ENCODE measurements at regions of chr13 and their contacts with region 1.

Region 1: DNA sequence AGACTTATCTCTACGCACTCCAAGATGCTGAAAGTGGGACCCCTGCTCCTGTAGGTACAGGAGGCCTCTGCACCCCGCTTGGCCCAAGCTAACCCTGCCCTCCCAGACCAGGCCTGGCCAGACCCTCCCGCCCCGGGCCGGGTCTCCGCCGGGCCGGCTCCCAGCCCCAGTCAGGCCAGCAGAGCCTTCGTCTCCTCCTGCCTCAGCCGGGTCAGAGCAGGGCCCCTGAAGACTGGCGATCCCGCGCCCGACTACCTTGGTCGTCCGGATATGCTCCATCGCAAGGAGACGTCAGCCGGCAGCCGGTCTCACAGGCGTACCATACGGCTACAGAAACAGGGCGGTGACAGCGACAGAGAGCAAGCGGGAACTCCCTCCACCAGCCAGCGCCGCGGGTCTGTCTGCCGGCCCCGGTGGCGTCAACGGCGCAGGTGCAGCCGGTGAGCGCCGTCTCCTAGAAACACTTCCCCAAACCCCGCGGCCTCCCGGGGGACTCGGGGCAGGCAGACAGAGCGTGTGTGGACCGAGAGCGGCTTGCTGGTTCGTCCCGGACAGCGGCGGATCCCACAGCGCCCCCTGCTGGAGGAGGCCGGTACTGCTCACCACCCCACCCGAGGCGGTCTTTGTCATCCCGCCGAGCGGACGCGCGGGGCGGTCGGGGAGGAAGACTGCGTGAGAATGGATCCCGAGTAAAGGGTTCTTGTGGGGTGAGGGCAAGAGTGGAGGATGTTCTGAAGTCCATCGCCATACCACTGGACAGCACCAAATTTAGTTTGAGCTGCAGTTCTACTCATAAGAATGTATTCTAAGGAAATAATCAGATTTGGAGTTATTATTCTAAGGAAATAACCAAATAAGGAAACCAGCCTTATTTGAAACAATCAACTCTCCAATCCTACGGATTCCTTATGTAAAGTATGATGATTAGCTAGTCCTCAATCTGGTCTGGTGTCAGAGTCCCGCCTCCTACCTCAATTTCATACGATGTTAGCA is at the start of gene MTMR6:
- DNase-seq: peak; percentile 96
- H3K4me3 Mint-ChIP-seq: peak within 1 kb of the TSS; percentile 93
- H3K27ac Mint-ChIP-seq: peak within 1 kb of the TSS; percentile 86
- H3K4me1 Mint-ChIP-seq: peaks cover 40% of the 10 kb centered on the region
- H3K27me3 Mint-ChIP-seq: no peaks in the 10 kb centered on the region
- total RNA-seq, gene MTMR6: 12.2 to 12.5 TPM

Region 2: DNA sequence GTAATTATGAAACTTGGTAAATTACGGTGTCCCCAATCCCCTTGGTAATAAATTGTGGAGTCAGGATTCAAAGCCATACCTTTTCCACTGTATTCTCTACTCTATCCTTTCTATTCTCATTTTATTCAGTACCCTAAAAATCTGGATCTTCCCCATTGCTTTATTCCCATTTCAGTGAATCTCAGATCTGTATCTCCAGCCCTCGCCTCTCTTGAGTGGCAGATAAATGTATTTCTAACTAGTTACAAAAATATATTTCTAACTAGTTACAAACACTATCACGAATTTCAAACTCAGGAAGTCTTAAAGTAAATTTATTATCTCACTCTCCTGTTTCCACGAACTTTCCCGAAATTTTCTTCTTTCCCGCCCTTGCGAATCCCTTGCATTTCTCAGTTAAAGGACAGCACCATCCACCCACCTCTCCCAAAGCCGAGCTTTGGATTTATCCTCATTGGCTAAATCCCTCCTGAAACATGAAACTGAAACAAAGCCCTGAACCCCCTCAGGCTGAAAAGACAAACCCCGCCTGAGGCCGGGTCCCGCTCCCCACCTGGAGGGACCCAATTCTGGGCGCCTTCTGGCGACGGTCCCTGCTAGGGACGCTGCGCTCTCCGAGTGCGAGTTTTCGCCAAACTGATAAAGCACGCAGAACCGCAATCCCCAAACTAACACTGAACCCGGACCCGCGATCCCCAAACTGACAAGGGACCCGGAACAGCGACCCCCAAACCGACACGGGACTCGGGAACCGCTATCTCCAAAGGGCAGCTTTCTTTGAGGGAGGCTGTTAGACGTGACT is 355.6 kb before region 1 on chr13:
- CTCF ChIA-PET with region 1: no interaction called
- POLR2A ChIA-PET with region 1: no interaction called
- intact Hi-C with region 1: no loop called
- DNase-seq: no peak
- H3K4me3 Mint-ChIP-seq: no peak overlapping the region
- H3K27ac Mint-ChIP-seq: no peak overlapping the region
- H3K4me1 Mint-ChIP-seq: no peaks in the 10 kb centered on the region
- H3K27me3 Mint-ChIP-seq: peaks cover 38% of the 10 kb centered on the region

Region 3: GRCh38 chr13:25267715-25268114 is 19.6 kb before region 1 on chr13:
- CTCF ChIA-PET with region 1: interaction called, 9 read pairs
- POLR2A ChIA-PET with region 1: no interaction called
- intact Hi-C with region 1: loop called (anchors 1 kb)
- DNase-seq: no peak
- H3K4me3 Mint-ChIP-seq: no peak overlapping the region
- H3K27ac Mint-ChIP-seq: no peak overlapping the region
- H3K4me1 Mint-ChIP-seq: no peaks in the 10 kb centered on the region
- H3K27me3 Mint-ChIP-seq: no peaks in the 10 kb centered on the region

Measured in activated CD4-positive, alpha-beta memory T cell treated with anti-CD3 and anti-CD28 coated beads for 36 hours (primary cell).